SK-N-SH (cell line): ENCODE measurements at regions of chr9 and their contacts with region 1.

Region 1: DNA sequence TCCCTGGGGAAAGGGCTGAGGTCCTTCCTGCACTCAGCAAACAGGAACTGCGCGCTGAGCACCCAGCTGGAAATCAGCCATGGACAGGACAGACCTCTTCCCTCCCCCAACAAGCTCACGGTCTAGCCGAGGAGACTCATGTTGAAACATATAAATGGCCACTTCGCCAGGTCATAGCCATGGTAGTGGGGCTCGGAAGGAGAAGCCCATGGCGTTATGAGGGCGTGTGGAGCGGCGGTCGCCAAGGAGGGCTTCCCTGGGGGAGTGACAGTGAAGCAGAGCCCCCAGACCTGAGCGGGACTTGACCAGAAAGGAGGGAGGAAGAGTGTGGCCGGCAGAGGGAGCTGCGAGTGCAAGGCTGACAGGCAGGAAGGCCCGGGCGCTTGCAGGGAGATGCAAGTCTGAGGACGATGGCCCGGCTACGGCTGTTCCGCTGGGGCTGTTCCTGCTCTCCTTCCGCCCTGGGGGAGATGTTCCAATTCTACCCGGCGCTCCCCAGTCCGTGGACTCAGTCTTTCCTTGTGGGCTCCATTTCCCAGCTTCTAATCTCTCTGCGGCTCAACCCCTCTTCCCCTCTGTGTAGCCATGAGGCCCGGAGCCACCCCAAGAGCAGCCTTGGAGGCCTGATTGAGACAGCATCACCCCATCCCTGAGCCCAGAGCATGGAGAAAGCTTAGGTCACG is 43.9 kb upstream of the PRRC2B start:
- DNase-seq: peak; percentile 90
- H3K4me3 ChIP-seq: peak overlapping the region; percentile 40 to 67
- H3K27ac ChIP-seq: no peak overlapping the region
- H3K4me1 ChIP-seq: peaks cover 0 to 5% of the 10 kb centered on the region in 2 experiments; a peak in 1 of 4 replicates
- H3K27me3 ChIP-seq: no peaks in the 10 kb centered on the region
- CTCF ChIP-seq: peak; percentile 81
- EP300 ChIP-seq: no peak
- RAD21 ChIP-seq: peak; percentile 85

Region 2: GRCh38 chr9:131178382-131178781 is 171.6 kb before region 1 on chr9:
- CTCF ChIA-PET with region 1: interaction called, 13 read pairs
- POLR2A ChIA-PET with region 1: no interaction called
- DNase-seq: peak; percentile 83
- H3K4me3 ChIP-seq: no peak overlapping the region; a peak in 1 of 4 replicates
- H3K27ac ChIP-seq: peak overlapping the region in 1 of 2 experiments; percentile 96; a peak in 2 of 4 replicates
- H3K4me1 ChIP-seq: peaks cover 0 to 24% of the 10 kb centered on the region in 2 experiments; a peak in 2 of 4 replicates
- H3K27me3 ChIP-seq: no peaks in the 10 kb centered on the region
- CTCF ChIP-seq: peak; percentile 93
- EP300 ChIP-seq: no peak
- RAD21 ChIP-seq: peak; percentile 83

Region 3: DNA sequence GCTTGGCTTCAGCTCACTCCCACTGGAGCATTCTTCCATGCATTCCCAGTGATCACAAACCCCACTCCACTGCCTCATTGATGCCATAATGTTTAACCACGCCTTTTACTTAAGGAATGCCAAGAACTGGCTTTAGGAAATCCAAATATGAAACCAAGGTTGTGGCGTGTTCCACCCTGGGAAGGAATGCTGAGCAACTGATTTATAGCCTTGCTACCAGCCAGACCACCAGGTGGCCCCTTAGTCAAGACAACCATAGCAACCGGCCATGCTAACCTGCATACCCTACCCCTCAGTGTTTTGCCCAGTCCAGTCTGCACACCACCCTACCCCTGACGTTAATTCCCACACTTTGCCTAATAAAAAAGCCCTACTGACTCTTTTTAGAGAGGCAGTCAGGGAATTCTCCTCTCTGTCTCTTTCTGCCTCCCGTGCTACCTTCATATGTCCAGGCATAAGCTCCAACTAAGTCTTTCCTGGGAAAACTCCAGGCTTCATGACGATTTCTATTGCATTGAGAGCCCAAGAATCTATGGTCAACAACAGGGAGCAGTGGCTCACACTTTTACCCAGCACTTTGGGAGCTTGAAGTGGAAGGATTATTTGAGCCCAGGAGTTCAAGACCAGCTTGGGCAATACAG is 16.9 kb after region 1 on chr9:
- CTCF ChIA-PET with region 1: interaction called, 26 read pairs
- POLR2A ChIA-PET with region 1: no interaction called
- DNase-seq: peak; percentile 63
- H3K4me3 ChIP-seq: no peak overlapping the region
- H3K27ac ChIP-seq: no peak overlapping the region
- H3K4me1 ChIP-seq: no peaks in the 10 kb centered on the region; a peak in 1 of 4 replicates
- H3K27me3 ChIP-seq: no peaks in the 10 kb centered on the region
- CTCF ChIP-seq: peak; percentile 38
- EP300 ChIP-seq: no peak
- RAD21 ChIP-seq: peak; percentile 72

Region 4: DNA sequence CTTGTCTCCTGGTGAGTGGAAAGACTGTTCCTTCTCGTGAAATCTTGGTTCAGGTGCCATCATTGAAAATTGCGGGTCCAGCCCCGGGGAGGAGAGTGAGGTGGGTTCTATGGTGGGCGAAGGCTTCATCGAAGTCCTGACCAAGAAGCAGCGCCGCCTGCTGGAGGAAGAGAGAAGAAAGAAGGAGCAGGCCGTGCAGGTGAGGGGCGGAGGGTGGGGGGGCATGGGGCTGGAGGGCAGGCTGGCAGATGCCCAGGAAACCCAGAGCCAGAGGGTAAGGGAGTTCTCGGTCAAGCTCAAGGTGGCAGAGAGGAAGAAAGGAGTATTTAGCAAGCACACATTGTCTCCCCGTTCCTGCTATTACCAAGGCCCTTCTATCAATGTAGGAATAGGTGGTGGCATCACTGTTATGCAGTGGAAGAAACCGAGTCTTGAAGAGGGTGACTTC is 128.4 kb after region 1 on chr9:
- CTCF ChIA-PET with region 1: interaction called, 50 read pairs
- POLR2A ChIA-PET with region 1: no interaction called
- DNase-seq: peak; percentile 86
- H3K4me3 ChIP-seq: no peak overlapping the region
- H3K27ac ChIP-seq: no peak overlapping the region
- H3K4me1 ChIP-seq: no peaks in the 10 kb centered on the region; a peak in 1 of 4 replicates
- H3K27me3 ChIP-seq: no peaks in the 10 kb centered on the region
- CTCF ChIP-seq: peak; percentile 71
- EP300 ChIP-seq: no peak
- RAD21 ChIP-seq: peak; percentile 49

Region 5: DNA sequence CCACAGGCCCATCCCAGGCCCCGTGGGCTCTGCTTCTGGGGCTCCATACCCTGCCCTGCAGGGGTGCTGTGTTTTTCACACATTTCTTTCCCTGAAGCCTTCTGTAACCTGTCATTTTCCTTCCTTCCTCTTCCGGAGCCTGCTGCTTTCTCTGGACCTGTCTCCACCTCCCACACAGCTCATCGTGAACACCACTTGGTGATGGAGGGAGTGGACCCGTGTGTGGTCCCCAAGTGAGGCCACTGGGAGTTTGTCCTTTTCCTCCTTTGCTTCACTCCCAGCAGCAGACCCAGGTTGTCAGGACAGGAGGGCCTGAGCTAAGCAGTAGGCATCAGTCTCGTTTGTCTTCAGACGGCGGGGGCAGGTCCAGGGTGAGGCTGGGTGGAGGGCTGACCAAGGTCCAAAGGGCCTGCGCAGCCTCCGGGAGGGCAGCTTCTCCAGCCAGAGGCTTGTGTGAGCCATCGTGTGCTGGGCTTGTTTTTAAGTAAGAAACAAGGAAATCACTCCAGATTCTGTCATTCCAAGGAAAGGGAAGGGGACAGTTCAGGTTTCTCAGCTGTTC is 146.9 kb after region 1 on chr9:
- CTCF ChIA-PET with region 1: interaction called, 19 read pairs
- POLR2A ChIA-PET with region 1: no interaction called
- DNase-seq: no peak
- H3K4me3 ChIP-seq: no peak overlapping the region
- H3K27ac ChIP-seq: no peak overlapping the region; a peak in 1 of 4 replicates
- H3K4me1 ChIP-seq: peaks cover 0 to 4% of the 10 kb centered on the region in 2 experiments; a peak in 1 of 4 replicates
- H3K27me3 ChIP-seq: no peaks in the 10 kb centered on the region
- CTCF ChIP-seq: no peak
- EP300 ChIP-seq: no peak
- RAD21 ChIP-seq: no peak